ENCODE measurements at regions of chr10 and their contacts with region 1.

Region 1: DNA sequence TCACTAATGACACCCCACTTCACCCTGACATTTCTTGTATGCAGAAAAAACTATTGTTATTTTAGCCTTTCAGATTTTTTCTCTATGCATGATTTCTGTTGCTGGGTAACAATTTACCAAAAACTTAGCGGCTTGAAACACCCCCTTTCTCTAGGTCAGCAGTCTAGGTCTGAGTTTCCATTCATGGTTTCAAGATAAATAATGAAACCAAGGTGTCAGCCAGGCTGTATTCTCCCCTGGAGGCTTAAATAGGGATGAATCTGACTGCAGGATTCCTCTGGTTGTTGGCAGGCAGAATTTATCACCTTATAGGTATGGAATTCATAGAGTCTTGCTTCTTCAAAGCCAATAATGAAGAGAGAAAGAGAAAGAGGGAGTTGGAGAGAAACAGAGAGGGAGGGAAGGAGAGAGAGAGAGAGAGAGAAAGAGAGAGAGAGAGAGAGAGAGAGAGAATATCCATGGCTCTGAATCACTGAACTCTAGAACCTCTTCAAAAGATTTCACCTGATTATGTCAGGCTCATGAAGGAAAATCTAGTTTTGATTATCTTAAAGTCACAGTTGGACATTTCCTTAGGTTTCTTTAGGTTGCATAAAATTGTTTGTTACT is 1224.6 kb upstream of the LRRTM3 start:
- DNase-seq: no peak
- H3K4me3 ChIP-seq: no peak overlapping the region
- H3K27ac ChIP-seq: no peak overlapping the region
- H3K4me1 ChIP-seq: no peaks in the 10 kb centered on the region
- H3K27me3 ChIP-seq: no peaks in the 10 kb centered on the region
- CTCF ChIP-seq: no peak
- POLR2A ChIP-seq: no peak

Region 2: DNA sequence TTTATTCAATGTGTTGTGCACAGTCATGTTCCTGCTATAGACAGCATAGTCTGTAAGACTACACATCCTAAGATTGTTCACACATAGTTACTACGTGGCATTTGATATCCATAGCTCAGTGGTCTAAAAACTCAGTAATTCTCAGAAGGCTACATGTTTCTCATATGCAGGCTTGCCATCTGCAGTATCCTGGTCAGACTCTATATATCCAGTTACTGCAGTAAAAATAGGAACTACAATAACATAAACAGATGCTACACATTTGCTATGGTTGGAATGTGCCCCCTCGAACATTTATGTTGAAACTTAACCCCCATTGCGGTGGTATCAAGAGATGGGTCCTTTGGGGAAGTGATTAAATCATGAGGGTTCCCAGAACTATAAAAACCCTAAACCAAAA is 153.3 kb before region 1 on chr10:
- intact Hi-C with region 1: loop called (anchors 5 kb)
- DNase-seq: no peak
- H3K4me3 ChIP-seq: no peak overlapping the region
- H3K27ac ChIP-seq: no peak overlapping the region
- H3K4me1 ChIP-seq: no peaks in the 10 kb centered on the region
- H3K27me3 ChIP-seq: no peaks in the 10 kb centered on the region
- CTCF ChIP-seq: no peak
- POLR2A ChIP-seq: no peak

Region 3: GRCh38 chr10:65719790-65720189 is 18.5 kb after region 1 on chr10:
- intact Hi-C with region 1: no loop called
- DNase-seq: no peak
- H3K4me3 ChIP-seq: no peak overlapping the region
- H3K27ac ChIP-seq: no peak overlapping the region
- H3K4me1 ChIP-seq: no peaks in the 10 kb centered on the region
- H3K27me3 ChIP-seq: no peaks in the 10 kb centered on the region
- CTCF ChIP-seq: no peak
- POLR2A ChIP-seq: no peak

Region 4: GRCh38 chr10:65827359-65827758 is 126.1 kb after region 1 on chr10:
- intact Hi-C with region 1: no loop called
- DNase-seq: no peak
- H3K4me3 ChIP-seq: no peak overlapping the region
- H3K27ac ChIP-seq: no peak overlapping the region
- H3K4me1 ChIP-seq: no peaks in the 10 kb centered on the region
- H3K27me3 ChIP-seq: no peaks in the 10 kb centered on the region
- CTCF ChIP-seq: no peak
- POLR2A ChIP-seq: no peak

Region 5: GRCh38 chr10:66025186-66025585 is 323.9 kb after region 1 on chr10:
- intact Hi-C with region 1: no loop called
- DNase-seq: no peak
- H3K4me3 ChIP-seq: no peak overlapping the region
- H3K27ac ChIP-seq: no peak overlapping the region
- H3K4me1 ChIP-seq: no peaks in the 10 kb centered on the region
- H3K27me3 ChIP-seq: no peaks in the 10 kb centered on the region
- CTCF ChIP-seq: no peak
- POLR2A ChIP-seq: no peak